MCF 10A (cell line): ENCODE measurements at regions of chr4 and their contacts with region 1.

Region 1: DNA sequence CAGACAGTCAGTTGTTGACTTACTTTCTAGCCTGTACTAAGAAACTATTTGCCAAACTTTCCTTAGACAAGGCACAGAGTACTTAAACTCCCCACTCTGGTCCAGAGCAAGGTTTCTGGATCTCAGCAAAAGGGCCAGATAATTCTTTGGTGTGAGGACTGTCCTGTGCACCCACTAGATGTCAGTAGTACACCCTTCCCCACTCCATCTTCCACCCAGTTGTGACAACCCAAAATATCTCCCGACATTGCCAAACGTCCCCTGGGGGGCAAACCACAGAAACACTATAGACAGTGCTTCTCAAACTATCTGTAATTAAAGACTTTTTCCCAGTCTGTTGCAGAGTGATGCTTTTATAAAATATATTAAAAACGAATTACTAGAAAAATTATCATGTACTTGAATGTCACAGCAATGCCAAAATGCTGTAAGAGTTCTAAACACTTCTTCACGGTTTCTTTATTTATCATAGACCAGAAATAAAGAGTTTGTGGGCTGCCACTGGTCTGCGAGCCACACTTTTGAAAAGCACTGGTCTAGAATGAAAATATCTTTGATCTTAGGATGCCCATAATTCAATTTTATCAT is 203.5 kb downstream of the PRDM5 start:
- DNase-seq: peak; percentile 56
- H3K4me3 Mint-ChIP-seq: no peak overlapping the region
- H3K27ac Mint-ChIP-seq: no peak overlapping the region
- H3K4me1 Mint-ChIP-seq: no peaks in the 10 kb centered on the region
- H3K27me3 Mint-ChIP-seq: no peaks in the 10 kb centered on the region
- CTCF ChIP-seq: peak; percentile 59

Region 2: GRCh38 chr4:120873554-120873953 is 154.5 kb after region 1 on chr4:
- CTCF ChIA-PET with region 1: no interaction called
- POLR2A ChIA-PET with region 1: no interaction called
- intact Hi-C with region 1: no loop called
- DNase-seq: no peak
- H3K4me3 Mint-ChIP-seq: no peak overlapping the region
- H3K27ac Mint-ChIP-seq: no peak overlapping the region
- H3K4me1 Mint-ChIP-seq: no peaks in the 10 kb centered on the region
- H3K27me3 Mint-ChIP-seq: no peaks in the 10 kb centered on the region
- CTCF ChIP-seq: no peak

Region 3: GRCh38 chr4:120922381-120923206 is 203.5 kb after region 1 on chr4 and contains the start of gene PRDM5:
- CTCF ChIA-PET with region 1: interaction called, 10 read pairs
- POLR2A ChIA-PET with region 1: no interaction called
- intact Hi-C with region 1: loop called (anchors 2 kb)
- DNase-seq: peak; percentile 40
- H3K4me3 Mint-ChIP-seq: peak within 1 kb of the TSS; percentile 99
- H3K27ac Mint-ChIP-seq: peak within 1 kb of the TSS; percentile 93
- H3K4me1 Mint-ChIP-seq: peaks cover 8% of the 10 kb centered on the region
- H3K27me3 Mint-ChIP-seq: no peaks in the 10 kb centered on the region
- CTCF ChIP-seq: no peak
- total RNA-seq, gene PRDM5: 6.4 and 7.3 TPM in 2 replicates

Region 4: GRCh38 chr4:120977435-120977997 is 258.4 kb after region 1 on chr4:
- CTCF ChIA-PET with region 1: no interaction called
- POLR2A ChIA-PET with region 1: no interaction called
- intact Hi-C with region 1: loop called (anchors 2 kb)
- DNase-seq: peak; percentile 57
- H3K4me3 Mint-ChIP-seq: no peak overlapping the region
- H3K27ac Mint-ChIP-seq: no peak overlapping the region
- H3K4me1 Mint-ChIP-seq: no peaks in the 10 kb centered on the region
- H3K27me3 Mint-ChIP-seq: no peaks in the 10 kb centered on the region
- CTCF ChIP-seq: peak; percentile 38

Region 5: DNA sequence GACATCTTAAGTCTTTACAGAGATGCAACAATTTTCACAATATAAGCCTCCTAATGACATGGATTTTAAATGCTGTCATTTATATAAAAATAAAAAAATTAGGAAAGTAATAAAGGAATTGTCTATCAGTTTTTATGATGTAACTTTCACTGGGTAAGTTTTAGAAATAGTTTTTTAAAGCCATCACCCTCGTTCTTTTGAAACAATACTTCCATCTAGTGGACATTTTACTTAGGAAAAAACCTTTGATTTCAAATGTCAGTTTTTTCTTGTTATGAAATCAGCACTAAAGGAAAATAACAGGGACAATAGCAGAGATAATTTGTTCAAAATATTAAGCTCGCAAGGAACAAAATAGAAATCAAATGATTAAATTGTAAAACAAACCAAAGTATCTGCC is 377.6 kb after region 1 on chr4:
- CTCF ChIA-PET with region 1: interaction called, 11 read pairs
- POLR2A ChIA-PET with region 1: no interaction called
- intact Hi-C with region 1: loop called (anchors 1 kb)
- DNase-seq: peak; percentile 36
- H3K4me3 Mint-ChIP-seq: no peak overlapping the region
- H3K27ac Mint-ChIP-seq: no peak overlapping the region
- H3K4me1 Mint-ChIP-seq: no peaks in the 10 kb centered on the region
- H3K27me3 Mint-ChIP-seq: no peaks in the 10 kb centered on the region
- CTCF ChIP-seq: peak; percentile 34